ENCODE measurements at regions of chr12 and their contacts with region 1.

Region 1: GRCh38 chr12:111812881-111813741 is 28.9 kb upstream of the MAPKAPK5 start:
- DNase-seq: peak; percentile 80
- ATAC-seq: peak; percentile 93
- H3K4me3 ChIP-seq: no peak overlapping the region
- H3K27ac ChIP-seq: no peak overlapping the region
- H3K4me1 ChIP-seq: peaks cover 23% of the 10 kb centered on the region
- H3K27me3 ChIP-seq: no peaks in the 10 kb centered on the region
- CTCF ChIP-seq: peak; percentile 94
- EP300 ChIP-seq: no peak
- POLR2A ChIP-seq: no peak
- RAD21 ChIP-seq: peak; percentile 73

Region 2: GRCh38 chr12:111341426-111342065 is 471.6 kb before region 1 on chr12:
- CTCF ChIA-PET with region 1: no interaction called
- POLR2A ChIA-PET with region 1: no interaction called
- in situ Hi-C with region 1: no loop called
- intact Hi-C with region 1: no loop called
- DNase-seq: no peak
- ATAC-seq: no peak; the same call in 2 of the 3 replicates
- H3K4me3 ChIP-seq: no peak overlapping the region
- H3K27ac ChIP-seq: no peak overlapping the region
- H3K4me1 ChIP-seq: no peaks in the 10 kb centered on the region
- H3K27me3 ChIP-seq: peaks cover 3 to 12% of the 10 kb centered on the region in 2 experiments; a peak in 3 of 5 replicates
- CTCF ChIP-seq: no peak
- EP300 ChIP-seq: no peak
- POLR2A ChIP-seq: no peak
- RAD21 ChIP-seq: no peak

Region 3: DNA sequence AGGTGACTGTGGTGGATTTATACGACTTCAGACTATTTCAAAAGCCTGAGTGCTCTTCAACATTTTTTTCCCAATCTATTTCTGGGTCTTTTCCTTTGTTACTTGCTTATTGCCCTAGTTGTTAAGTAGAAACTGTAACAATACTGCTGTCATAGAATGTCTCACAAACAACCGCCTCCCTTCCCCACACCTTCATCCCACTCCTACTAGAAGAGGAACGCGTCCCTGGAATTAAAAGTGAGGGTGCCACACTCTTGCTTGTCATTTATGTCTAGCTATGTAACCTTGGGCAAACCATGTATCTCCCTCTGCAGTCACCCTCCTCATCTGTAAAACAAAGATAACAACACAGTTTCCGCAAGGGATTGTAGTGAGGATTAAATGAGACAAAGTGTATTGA is 135.9 kb before region 1 on chr12:
- CTCF ChIA-PET with region 1: no interaction called
- POLR2A ChIA-PET with region 1: no interaction called
- in situ Hi-C with region 1: no loop called
- intact Hi-C with region 1: no loop called
- DNase-seq: no peak
- ATAC-seq: no peak
- H3K4me3 ChIP-seq: no peak overlapping the region
- H3K27ac ChIP-seq: no peak overlapping the region
- H3K4me1 ChIP-seq: no peaks in the 10 kb centered on the region; the same call in 1 of the 2 replicates
- H3K27me3 ChIP-seq: no peaks in the 10 kb centered on the region; a peak in 1 of 5 replicates
- CTCF ChIP-seq: no peak
- EP300 ChIP-seq: no peak
- POLR2A ChIP-seq: no peak
- RAD21 ChIP-seq: no peak

Region 4: DNA sequence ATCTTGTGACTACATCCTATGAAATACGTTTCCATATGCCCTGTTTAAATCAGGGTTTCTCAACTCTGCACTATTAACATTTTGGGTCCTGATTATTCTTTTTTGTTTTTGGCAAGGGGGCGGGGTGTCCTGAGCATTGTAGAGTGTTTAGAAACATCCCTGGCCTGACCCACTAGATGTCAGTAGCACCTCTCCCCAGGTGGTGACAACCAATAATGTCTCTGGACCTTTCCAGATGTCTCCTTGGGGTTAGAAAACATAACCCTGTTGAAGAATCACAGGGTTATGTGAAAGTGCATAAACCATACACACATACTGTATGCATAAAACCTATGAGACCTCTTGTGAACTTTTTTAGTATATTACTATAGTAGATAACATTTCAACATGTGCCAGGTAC is 125.9 kb before region 1 on chr12:
- CTCF ChIA-PET with region 1: no interaction called
- POLR2A ChIA-PET with region 1: interaction called, 5 read pairs
- in situ Hi-C with region 1: no loop called
- intact Hi-C with region 1: loop called (anchors 1 kb)
- DNase-seq: peak; percentile 31
- ATAC-seq: peak; percentile 35
- H3K4me3 ChIP-seq: peak overlapping the region in 1 of 3 experiments; percentile 89; a peak in 1 of 6 replicates
- H3K27ac ChIP-seq: no peak overlapping the region
- H3K4me1 ChIP-seq: peaks cover 26% of the 10 kb centered on the region
- H3K27me3 ChIP-seq: peaks cover 0 to 7% of the 10 kb centered on the region in 2 experiments; a peak in 1 of 5 replicates
- CTCF ChIP-seq: peak; percentile 35; the same call in 1 of the 2 replicates
- EP300 ChIP-seq: no peak
- POLR2A ChIP-seq: no peak
- RAD21 ChIP-seq: no peak; the same call in 1 of the 2 replicates

Region 5: GRCh38 chr12:111753144-111753881 is 59.8 kb before region 1 on chr12:
- CTCF ChIA-PET with region 1: interaction called, 31 read pairs
- POLR2A ChIA-PET with region 1: interaction called, 4 read pairs
- in situ Hi-C with region 1: loop called (anchors 10 kb)
- intact Hi-C with region 1: loop called (anchors 1 kb)
- DNase-seq: peak; percentile 53
- ATAC-seq: peak; percentile 98
- H3K4me3 ChIP-seq: no peak overlapping the region
- H3K27ac ChIP-seq: no peak overlapping the region
- H3K4me1 ChIP-seq: peaks cover 16% of the 10 kb centered on the region
- H3K27me3 ChIP-seq: no peaks in the 10 kb centered on the region
- CTCF ChIP-seq: peak; percentile 98
- EP300 ChIP-seq: no peak
- POLR2A ChIP-seq: no peak
- RAD21 ChIP-seq: peak; percentile 98

Region 6: DNA sequence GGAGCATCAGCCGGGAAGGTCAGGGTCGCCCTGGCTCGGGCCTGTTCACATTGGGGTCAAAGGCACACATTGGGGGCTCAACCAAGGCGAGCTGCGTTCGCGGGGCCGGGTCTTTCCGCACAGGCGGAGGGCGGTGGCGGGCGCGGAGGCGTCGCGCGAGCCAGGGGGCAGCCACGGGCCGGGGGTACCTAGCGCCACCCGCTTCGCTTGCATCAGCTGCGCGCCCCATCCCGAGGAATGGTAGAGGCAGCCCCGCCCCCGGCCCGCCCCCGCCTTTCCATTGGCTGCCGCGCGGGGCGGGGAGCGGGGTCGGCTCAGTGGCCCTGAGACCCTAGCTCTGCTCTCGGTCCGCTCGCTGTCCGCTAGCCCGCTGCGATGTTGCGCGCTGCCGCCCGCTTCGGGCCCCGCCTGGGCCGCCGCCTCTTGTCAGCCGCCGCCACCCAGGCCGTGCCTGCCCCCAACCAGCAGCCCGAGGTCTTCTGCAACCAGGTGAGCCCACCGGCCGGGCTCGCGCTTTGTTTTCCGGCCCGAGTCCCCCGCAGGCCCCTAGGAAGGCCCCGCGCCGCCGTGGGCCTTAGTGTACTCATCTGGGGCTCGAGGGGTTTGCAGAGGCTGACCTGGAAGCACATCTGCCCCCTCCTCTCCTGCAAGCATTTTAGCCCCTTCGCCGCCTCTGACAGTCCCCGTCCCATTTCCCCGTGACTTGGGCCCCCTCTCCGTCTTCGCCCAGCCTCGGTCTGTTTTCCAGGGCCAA is 46.3 kb before region 1 on chr12 and contains the start of gene ALDH2:
- CTCF ChIA-PET with region 1: interaction called, 3 read pairs
- POLR2A ChIA-PET with region 1: interaction called, 10 read pairs
- in situ Hi-C with region 1: no loop called
- intact Hi-C with region 1: no loop called
- DNase-seq: peak; percentile 72
- ATAC-seq: peak; percentile 95
- H3K4me3 ChIP-seq: peak within 1 kb of the TSS; percentile 79 to 92 (median 80)
- H3K27ac ChIP-seq: peak within 1 kb of the TSS; percentile 74
- H3K4me1 ChIP-seq: peaks cover 48% of the 10 kb centered on the region
- H3K27me3 ChIP-seq: no peaks in the 10 kb centered on the region; a peak in 1 of 5 replicates
- CTCF ChIP-seq: peak; percentile 61
- EP300 ChIP-seq: no peak
- POLR2A ChIP-seq: peak; percentile 69 to 94
- RAD21 ChIP-seq: peak; percentile 59; the same call in 1 of the 2 replicates
- total RNA-seq, gene ALDH2: 72.8 and 103 TPM in 2 replicates

Region 7: DNA sequence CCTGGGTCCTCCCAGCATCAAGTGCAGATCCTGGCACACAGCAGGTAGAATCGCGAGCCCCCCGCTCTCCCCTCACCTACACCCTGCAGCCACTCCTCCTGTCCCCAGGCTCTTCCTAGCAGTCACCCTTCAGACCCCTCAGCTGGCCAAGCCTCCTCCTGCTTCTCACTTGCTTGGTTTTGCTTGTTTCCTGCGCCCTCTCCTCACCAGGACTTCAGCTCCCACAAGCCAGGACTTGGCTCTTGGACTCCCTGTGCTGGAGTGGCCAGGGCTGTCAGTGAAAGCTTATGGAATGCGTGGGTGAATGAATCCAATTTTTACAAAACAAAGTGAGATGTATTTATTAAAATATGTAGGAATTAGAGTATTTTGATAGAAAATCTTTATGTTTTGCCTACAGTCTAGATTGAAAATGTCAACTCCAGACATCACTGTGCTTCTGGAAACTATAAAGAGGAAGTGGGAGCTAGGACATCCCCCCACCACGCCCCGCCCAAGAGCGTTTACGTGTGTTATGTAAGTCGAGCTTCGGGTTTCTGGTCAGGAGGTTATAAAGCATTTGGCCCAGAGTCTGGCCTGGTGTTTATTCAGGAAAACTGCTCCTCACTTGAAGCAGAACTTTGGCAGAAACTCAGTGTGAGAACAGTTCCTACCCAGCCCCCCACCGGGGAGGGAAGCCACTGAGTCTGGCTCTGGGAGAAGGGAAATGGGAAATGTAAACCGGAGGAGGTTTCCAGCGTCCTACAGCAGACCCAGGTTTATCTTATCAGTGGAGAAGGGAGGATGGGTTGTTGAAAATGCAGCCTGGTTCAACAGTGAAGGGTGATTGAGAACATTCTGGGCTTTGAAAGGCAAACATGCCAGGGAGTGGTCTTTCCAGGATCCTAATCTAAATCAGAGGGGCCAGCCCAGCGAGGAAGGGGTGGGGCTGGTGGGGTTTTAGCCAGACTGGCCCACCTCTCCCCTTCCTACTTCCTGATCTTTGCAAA is 37.6 kb before region 1 on chr12:
- CTCF ChIA-PET with region 1: no interaction called
- POLR2A ChIA-PET with region 1: no interaction called
- in situ Hi-C with region 1: no loop called
- intact Hi-C with region 1: loop called (anchors 5 kb)
- DNase-seq: peak; percentile 80
- ATAC-seq: no peak
- H3K4me3 ChIP-seq: peak overlapping the region; percentile 9 to 46 (median 15); a peak in 1 of 6 replicates
- H3K27ac ChIP-seq: peak overlapping the region; percentile 87
- H3K4me1 ChIP-seq: peaks cover 92% of the 10 kb centered on the region
- H3K27me3 ChIP-seq: no peaks in the 10 kb centered on the region
- CTCF ChIP-seq: no peak
- EP300 ChIP-seq: no peak
- POLR2A ChIP-seq: no peak; a peak in 1 of 4 replicates
- RAD21 ChIP-seq: no peak

Region 8: DNA sequence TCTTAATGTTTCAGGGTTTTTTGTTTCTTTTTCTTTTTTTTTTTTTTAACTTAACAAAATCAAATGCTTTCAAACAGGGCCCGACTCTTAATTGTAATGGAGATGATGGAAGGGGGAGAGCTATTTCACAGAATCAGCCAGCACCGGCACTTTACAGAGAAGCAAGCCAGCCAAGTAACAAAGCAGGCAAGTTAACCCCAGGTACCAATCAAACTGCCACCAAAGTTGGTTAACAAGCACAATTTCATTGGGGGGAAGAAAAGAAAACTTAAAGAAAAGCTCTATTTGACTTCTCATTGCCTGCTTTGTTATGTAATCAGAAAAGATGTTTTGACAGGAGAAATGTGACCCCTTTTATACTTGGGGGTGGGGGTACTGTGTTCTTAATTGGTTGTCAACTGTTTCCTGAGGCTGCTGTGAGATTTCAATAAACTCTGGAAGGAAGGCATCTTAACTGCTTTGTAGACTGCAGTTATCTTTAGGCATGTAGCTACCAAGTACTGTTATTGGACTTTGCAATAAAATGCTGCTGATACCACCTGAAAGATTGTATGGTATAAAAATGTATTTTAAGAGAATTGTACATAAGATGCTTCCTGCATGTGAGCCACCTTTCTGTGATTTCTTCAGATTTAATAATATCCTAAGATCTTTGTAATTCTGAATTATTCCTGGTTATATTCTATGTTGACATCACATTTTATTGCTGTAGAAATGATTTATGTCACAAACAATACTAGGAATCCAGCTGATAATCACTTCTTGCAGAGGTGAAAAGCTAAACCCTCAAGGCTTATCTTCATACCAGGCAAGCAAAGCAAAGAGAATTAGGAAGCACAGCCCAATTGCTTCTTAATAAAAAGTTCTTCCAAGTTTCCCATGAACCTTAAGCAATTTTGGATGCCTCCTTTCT is 55.8 kb after region 1 on chr12:
- CTCF ChIA-PET with region 1: no interaction called
- POLR2A ChIA-PET with region 1: no interaction called
- in situ Hi-C with region 1: no loop called
- intact Hi-C with region 1: no loop called
- DNase-seq: no peak
- ATAC-seq: no peak
- H3K4me3 ChIP-seq: no peak overlapping the region
- H3K27ac ChIP-seq: no peak overlapping the region
- H3K4me1 ChIP-seq: 0 out of 2 replicates have a peak, but pooled peaks cover 2% of the 10 kb centered on the region
- H3K27me3 ChIP-seq: no peaks in the 10 kb centered on the region
- CTCF ChIP-seq: no peak
- EP300 ChIP-seq: no peak
- POLR2A ChIP-seq: no peak
- RAD21 ChIP-seq: no peak

Region 9: DNA sequence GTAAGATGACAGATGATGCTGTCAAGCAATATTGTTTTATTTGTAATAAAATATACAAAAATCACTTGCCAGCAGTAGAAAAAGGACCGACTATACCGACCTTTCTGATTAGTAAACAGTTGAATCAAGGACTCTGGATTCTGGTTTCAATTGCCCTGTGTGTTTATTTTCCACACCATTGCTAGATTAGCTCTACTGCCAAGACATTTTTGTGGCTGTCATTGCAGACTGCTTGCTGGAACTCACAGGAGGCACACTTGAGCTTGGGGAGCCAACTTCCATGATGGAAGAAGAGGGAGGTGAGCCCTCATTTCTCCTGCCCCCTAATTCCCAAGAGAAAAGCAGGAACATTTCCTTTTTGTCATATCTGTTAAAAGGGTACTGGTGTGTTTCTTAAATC is 80.2 kb after region 1 on chr12:
- CTCF ChIA-PET with region 1: no interaction called
- POLR2A ChIA-PET with region 1: no interaction called
- in situ Hi-C with region 1: no loop called
- intact Hi-C with region 1: no loop called
- DNase-seq: no peak
- ATAC-seq: no peak
- H3K4me3 ChIP-seq: no peak overlapping the region
- H3K27ac ChIP-seq: no peak overlapping the region
- H3K4me1 ChIP-seq: peaks cover 6% of the 10 kb centered on the region
- H3K27me3 ChIP-seq: no peaks in the 10 kb centered on the region
- CTCF ChIP-seq: no peak
- EP300 ChIP-seq: no peak
- POLR2A ChIP-seq: no peak
- RAD21 ChIP-seq: no peak

Measured in HepG2 (cell line).